Right cardiac atrium (tissue), 5 donors: ENCODE measurements at regions of chr15 and their contacts with region 1.

Region 1: GRCh38 chr15:99104788-99105513 is at the start of gene SYNM:
- DNase-seq: peak; percentile 81 to 92 (median 92)
- ATAC-seq: peak; percentile 87 to 88
- H3K4me3 ChIP-seq: peak within 1 kb of the TSS; percentile 26
- H3K27ac ChIP-seq: peak within 1 kb of the TSS; percentile 71
- H3K4me1 ChIP-seq: no peaks in the 10 kb centered on the region
- H3K27me3 ChIP-seq: no peaks in the 10 kb centered on the region
- total RNA-seq, gene SYNM: 184 to 463 (median 218) TPM

Region 2: DNA sequence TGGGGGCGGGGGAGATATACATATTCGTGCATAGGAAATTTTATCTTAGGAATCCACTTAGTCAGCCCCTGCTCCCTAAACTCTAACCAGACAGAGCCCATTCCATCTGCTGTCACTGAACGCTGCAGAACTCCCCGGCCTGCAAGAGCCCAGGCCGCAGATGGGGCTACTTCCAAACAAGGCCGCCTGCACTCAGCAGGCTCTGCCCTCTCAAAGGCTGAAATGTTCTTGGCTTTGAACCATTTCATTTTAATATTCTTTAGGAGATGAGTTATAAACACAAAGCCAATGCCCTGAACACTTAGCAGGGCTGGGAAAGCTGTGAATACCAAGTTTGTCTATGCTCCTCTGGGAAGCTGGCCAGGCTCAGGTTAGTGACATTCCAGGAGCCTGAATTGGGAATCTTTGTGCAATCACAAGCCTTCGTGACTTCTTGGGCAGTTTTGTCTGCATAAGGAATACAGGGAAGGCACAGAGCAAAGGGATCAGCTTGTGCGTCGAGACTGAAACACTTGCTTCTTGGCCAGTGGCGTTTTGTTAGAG is 64.9 kb after region 1 on chr15:
- intact Hi-C with region 1: loop called in 1 of 4 experiments (anchors 10 kb)
- DNase-seq: peak in 2 of 3 donors; percentile 57 to 59
- ATAC-seq: peak; percentile 28 to 72
- H3K4me3 ChIP-seq: no peak overlapping the region
- H3K27ac ChIP-seq: peak overlapping the region; percentile 92
- H3K4me1 ChIP-seq: peaks cover 13% of the 10 kb centered on the region
- H3K27me3 ChIP-seq: no peaks in the 10 kb centered on the region

Region 3: DNA sequence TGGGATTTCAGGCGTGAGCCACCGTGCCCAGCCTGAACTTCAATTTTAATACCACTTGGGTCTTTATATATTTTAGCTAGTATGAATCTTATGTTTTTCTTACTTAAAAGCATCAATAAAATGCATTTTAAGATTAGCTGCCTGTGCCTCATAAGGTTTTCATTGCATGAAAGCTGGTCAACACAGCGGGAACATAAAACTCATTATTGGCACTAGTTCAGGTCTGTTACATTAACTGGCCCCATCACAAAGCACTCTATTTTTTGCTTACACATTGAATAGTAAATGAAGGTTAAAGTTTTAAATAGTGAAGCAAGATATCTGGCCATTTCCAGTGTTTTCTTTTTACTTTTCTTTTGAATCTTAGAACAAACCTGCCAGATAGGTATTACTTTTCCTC is 773.9 kb after region 1 on chr15:
- intact Hi-C with region 1: no loop called
- DNase-seq: no peak
- ATAC-seq: no peak
- H3K4me3 ChIP-seq: no peak overlapping the region
- H3K27ac ChIP-seq: no peak overlapping the region
- H3K4me1 ChIP-seq: no peaks in the 10 kb centered on the region
- H3K27me3 ChIP-seq: no peaks in the 10 kb centered on the region